Right ventricle myocardium superior (tissue), 1 donor: ENCODE measurements at regions of chr5 and their contacts with region 1.

Region 1: GRCh38 chr5:150487199-150488061 is 20.5 kb upstream of the NDST1 start:
- DNase-seq: peak; percentile 59
- ATAC-seq: peak; percentile 48

Region 2: DNA sequence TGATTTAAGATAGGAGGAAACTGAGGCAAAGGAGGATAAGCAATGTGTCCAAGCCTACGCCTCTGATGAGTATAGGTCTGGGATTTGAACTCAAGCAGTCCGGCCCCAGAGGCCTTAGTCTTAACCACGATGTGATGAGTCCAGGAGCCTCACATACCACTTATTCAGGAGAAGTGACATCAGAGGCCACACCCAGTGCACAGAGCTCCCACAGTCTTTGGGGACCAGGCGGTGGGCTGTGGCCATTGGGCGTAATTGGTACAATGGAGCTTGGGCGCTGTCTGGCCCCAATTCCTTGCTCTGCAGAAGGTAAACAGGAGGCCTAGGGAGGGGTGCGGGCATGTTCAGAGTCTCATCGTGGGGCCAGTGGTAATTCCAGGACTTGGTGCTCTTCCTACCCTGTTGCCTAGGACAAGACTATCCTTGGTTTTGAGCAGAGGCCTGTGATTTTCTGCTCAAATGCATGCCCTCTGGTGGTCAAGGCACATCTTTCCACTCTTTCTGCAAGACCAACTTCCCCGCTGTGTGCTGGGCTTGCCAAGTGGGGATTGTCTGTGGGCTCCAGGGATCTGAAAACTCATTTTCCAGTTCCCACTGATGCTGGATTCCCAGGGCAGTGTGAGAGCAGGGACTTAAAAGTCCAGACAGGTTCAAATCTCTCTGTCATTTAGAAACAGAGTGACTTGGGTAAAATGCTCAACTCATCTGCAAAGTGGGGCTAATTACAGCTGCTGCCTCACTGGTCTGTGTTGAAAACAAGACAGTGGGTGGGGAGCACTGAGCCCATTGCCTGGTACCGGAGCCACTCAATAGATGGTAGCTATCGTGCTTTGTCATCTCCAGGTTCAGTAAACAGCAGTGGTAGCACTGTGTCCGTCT is 36.3 kb after region 1 on chr5:
- intact Hi-C with region 1: loop called (anchors 2 kb)
- DNase-seq: no peak
- ATAC-seq: peak; percentile 55